ENCODE measurements at regions of chr10 and their contacts with region 1.

Region 1: GRCh38 chr10:100303724-100304319 is 17.3 kb upstream of the BLOC1S2 start:
- DNase-seq: no peak
- H3K4me3 ChIP-seq: no peak overlapping the region
- H3K27ac ChIP-seq: no peak overlapping the region
- H3K27me3 ChIP-seq: peaks cover 0 to 7% (median 0%) of the 10 kb centered on the region in 45 donors
- CTCF ChIP-seq: peak; percentile 55 to 88 (median 73)

Region 2: DNA sequence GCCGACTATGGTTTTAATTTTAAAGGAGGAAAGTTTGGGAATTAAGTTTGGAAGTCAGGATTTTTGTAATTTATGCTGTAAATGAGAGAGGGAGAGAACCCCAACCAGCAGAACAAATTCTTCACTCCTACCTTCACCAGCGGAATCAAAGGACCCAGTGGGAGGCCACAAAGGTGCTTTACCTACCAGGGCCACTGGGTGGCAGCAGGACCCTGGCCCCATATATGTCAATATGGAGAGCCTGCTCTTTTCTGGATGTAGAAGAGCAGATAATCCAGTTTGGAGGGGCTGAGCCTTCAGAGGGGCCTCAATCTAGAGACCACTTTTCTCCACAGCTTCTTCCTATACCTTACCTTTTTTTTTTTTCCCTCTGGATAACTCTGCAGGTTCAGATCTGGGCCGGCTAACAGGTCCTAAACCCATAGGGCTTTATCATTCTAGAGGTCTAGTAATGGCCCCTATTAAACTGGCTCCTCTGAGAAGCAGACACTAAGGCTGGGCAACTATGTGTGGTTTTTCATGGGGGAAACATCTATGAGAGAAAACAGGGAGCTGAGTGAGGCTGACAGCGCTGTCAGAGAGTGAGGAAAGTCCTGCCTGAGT is 34.7 kb after region 1 on chr10:
- intact Hi-C with region 1: loop called (anchors 5 kb)
- DNase-seq: peak; percentile 66 to 88 (median 82)
- H3K4me3 ChIP-seq: no peak overlapping the region
- H3K27ac ChIP-seq: peak overlapping the region in 33 of 59 donors; percentile 6 to 99 (median 59)
- H3K27me3 ChIP-seq: no peaks in the 10 kb centered on the region
- CTCF ChIP-seq: peak; percentile 72 to 97 (median 92)

Region 3: DNA sequence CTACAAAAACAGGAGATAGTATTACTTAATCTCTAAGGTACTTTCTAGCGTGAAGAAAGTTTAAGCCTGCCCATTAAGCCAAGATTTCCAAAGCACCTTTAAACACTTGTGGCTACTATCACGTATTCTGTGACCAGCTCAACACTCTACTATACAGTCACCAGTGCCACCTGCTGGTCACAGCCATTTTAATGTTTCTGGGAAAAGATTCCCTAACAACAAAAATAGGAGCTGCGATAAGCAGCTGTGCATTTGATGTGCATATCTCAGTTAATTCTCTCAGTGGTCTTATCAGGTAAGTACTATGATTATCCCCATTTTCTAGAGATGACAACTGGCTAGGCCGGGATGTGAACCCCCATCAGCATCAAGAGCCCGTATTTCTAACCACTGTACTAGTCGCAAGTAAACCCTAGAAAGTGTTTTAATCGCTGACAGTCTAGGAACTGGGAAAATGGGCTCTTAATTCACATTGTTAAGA is 215.0 kb after region 1 on chr10:
- intact Hi-C with region 1: loop called in 1 of 2 experiments (anchors 5 kb)
- DNase-seq: peak in 7 of 10 donors; percentile 48 to 88 (median 65)
- H3K4me3 ChIP-seq: peak overlapping the region; percentile 48 to 87 (median 71)
- H3K27ac ChIP-seq: peak overlapping the region in 39 of 59 donors; percentile 9 to 88 (median 69)
- H3K27me3 ChIP-seq: no peaks in the 10 kb centered on the region
- CTCF ChIP-seq: peak; percentile 48 to 82 (median 72)

Region 4: DNA sequence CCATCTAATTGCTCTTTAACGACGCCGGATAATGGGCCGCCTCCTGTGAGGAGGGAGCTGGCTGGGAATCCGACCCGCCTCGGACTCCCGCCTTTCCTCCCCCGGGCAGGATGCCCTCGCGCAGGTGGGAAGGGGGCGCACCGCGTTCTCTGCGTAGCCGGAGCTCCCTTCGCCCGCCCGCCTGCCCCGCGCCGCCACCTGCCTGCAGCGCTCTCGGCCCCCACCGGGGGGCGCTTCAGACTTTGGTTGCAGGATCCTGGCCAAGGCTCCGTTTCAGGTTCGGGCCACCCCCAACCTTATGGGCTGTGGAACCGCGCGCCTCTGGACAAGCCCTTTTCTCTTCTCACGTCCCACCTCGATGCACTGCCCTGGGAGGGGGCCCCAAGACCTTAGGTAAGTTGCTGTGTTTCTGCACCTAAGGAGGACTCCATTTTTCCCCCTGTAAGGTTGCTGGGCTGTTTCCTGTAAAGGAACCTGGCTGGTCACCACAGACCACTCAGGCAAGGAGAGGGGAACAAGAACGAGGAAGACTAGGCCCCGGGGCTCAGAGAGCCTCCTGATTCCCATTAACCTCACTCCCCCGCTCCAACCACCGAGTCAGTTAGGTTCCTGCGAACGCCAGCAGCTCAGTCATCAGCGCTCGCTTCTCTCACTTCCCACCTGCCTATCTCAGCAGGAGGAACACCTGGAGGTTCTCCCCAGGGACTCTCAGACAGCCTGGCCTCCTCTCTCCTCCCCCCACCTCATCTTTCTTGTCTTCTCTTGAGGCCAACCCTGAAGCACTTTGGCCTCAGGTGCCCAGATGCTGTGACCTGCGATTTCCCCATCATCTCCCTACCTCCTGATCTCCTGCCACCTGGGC is 746.6 kb after region 1 on chr10:
- intact Hi-C with region 1: no loop called
- DNase-seq: peak in 2 of 10 donors; percentile 25 to 57
- H3K4me3 ChIP-seq: peak overlapping the region in 7 of 59 donors; percentile 4 to 46 (median 12)
- H3K27ac ChIP-seq: no peak overlapping the region
- H3K27me3 ChIP-seq: peaks cover 17 to 84% (median 64%) of the 10 kb centered on the region in 45 donors
- CTCF ChIP-seq: peak; percentile 23 to 76 (median 64)